ENCODE measurements at regions of chr4 and their contacts with region 1.

Region 1: GRCh38 chr4:104860238-104861123 is 286.2 kb upstream of the TET2 start:
- DNase-seq: peak; percentile 64
- ATAC-seq: peak; percentile 53; the same call in 1 of the 2 replicates
- H3K4me3 ChIP-seq: no peak overlapping the region
- H3K27ac ChIP-seq: no peak overlapping the region
- H3K4me1 ChIP-seq: no peaks in the 10 kb centered on the region
- H3K27me3 ChIP-seq: no peaks in the 10 kb centered on the region
- CTCF ChIP-seq: peak; percentile 79

Region 2: DNA sequence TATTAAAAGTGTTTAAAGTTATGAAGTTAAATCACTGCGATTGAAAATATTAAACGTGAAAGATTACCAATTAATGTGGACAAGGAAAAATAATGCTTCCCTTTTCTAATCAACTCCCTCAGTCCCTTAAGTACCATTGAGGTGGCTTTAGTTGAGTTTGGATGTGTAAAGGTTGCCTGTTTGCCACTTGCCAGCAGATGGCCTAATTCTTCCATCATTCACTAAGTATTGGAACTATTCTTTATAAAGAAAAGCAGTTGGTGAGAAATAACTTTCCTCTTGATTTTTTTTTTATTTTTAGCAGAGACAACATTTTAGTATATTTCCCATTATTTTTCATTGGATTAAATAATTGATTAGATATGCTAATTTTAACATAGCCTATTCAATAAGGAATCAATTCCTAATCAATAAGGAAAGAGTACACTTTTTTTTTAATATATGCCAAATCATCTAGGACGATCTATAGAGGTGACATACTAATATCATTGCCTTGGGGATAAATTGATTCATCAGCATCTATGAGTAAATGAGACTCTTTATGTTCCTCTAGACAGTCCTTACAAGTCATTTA is 844.7 kb before region 1 on chr4:
- CTCF ChIA-PET with region 1: no interaction called
- POLR2A ChIA-PET with region 1: no interaction called
- in situ Hi-C with region 1: no loop called
- intact Hi-C with region 1: loop called (anchors 5 kb)
- DNase-seq: no peak
- ATAC-seq: peak; percentile 71; the same call in 1 of the 2 replicates
- H3K4me3 ChIP-seq: no peak overlapping the region
- H3K27ac ChIP-seq: no peak overlapping the region
- H3K4me1 ChIP-seq: no peaks in the 10 kb centered on the region
- H3K27me3 ChIP-seq: no peaks in the 10 kb centered on the region
- CTCF ChIP-seq: peak; percentile 54; the same call in 1 of the 2 replicates

Region 3: DNA sequence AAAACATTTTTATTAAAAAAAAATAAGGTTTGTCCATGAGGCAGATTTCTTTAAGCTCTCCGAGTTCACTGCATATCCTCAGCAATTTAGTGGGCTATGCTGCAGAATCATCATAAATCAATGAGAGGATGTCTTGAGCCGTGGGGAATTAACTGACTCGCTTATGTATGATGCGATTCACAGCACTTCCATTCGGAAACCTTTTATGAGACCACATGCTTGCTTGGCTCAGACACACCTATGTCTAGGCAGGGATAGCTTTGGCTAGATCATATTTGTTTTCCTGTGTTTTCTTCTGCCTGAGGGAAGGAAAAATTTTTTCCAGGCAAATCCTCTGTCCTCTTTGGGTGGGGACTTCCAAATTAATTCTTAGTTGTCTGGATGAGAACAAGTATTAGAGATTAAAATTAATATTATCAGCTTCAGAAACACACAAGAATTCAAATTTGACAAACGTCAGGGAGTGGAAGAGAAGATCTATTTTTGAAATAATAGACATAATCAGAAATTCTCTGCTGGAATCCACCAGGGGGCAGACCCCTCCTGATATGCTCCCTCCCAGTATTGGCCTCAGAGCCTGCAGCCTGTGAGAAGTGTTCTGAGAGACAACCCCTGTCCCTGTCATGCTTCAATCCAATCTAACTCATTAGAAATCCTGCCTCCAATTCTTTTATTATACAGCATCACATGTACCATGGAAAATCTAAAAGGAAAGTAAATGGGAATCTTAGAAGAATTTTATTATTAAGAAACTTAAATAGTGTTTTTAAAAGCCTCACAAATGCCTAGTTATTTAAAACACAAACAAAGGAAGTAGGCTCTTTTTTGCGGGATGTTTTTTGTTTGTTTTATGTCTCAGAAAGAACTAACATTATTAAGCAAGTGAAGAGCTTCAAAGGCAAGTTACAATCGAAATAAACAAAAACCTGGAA is 795.6 kb before region 1 on chr4:
- CTCF ChIA-PET with region 1: no interaction called
- POLR2A ChIA-PET with region 1: no interaction called
- in situ Hi-C with region 1: no loop called
- intact Hi-C with region 1: loop called (anchors 1 kb)
- DNase-seq: peak; percentile 15
- ATAC-seq: peak; percentile 85; the same call in 1 of the 2 replicates
- H3K4me3 ChIP-seq: no peak overlapping the region
- H3K27ac ChIP-seq: no peak overlapping the region
- H3K4me1 ChIP-seq: no peaks in the 10 kb centered on the region
- H3K27me3 ChIP-seq: no peaks in the 10 kb centered on the region
- CTCF ChIP-seq: peak; percentile 70

Region 4: DNA sequence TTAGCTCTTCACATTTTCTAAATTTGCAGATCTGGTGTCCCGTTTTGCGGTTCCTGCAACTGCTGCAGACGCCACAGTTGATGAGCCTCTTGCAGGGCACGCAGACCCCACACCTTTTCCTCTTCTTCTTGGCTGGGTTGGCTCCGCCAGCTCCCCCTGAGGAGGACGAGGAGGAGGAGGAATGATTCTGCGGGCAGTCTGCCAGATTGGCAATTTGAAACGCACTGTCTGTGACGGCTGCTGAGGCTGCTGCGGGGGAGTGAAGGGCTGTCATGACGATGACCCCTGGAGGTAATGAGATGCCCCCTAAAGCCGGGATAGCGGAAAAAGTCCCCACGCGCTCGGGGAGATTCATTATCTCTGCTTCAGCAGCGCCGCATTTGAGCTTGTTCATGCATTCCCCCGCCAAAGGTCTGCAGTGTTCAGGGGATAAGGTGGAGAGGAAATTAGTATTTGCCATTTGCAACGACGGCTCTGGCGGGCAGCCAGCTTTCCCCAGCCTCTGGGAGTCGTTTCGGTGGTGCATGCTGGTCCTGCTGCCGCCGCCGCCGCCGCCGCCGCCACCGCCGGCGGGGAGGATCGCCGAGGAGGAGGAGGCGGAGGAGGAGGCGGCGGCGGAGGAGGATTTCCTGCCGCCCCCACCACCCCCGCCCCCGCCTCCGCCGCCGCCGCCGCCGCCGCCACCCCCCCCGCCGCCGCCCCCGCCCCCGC is 369.6 kb before region 1 on chr4:
- CTCF ChIA-PET with region 1: no interaction called
- POLR2A ChIA-PET with region 1: no interaction called
- in situ Hi-C with region 1: no loop called
- intact Hi-C with region 1: loop called (anchors 5 kb)
- DNase-seq: no peak
- ATAC-seq: peak; percentile 67
- H3K4me3 ChIP-seq: peak overlapping the region; percentile 46 to 72
- H3K27ac ChIP-seq: peak overlapping the region; percentile 34; the same call in 1 of the 2 replicates
- H3K4me1 ChIP-seq: peaks cover 3% of the 10 kb centered on the region; the same call in 1 of the 2 replicates
- H3K27me3 ChIP-seq: no peaks in the 10 kb centered on the region
- CTCF ChIP-seq: no peak

Region 5: GRCh38 chr4:104752337-104752736 is 108.1 kb before region 1 on chr4:
- CTCF ChIA-PET with region 1: no interaction called
- POLR2A ChIA-PET with region 1: no interaction called
- in situ Hi-C with region 1: no loop called
- intact Hi-C with region 1: no loop called
- DNase-seq: no peak
- ATAC-seq: no peak
- H3K4me3 ChIP-seq: no peak overlapping the region
- H3K27ac ChIP-seq: no peak overlapping the region
- H3K4me1 ChIP-seq: no peaks in the 10 kb centered on the region
- H3K27me3 ChIP-seq: no peaks in the 10 kb centered on the region
- CTCF ChIP-seq: no peak

Measured in Panc1 (cell line).